Naive thymus-derived CD4-positive, alpha-beta T cell (primary cell): ENCODE measurements at regions of chr3 and their contacts with region 1.

Region 1: GRCh38 chr3:52705688-52706686 is at the starts of genes GLT8D1 and SPCS1:
- DNase-seq: peak; percentile 83 to 96 (median 91)
- ATAC-seq: peak; percentile 94
- H3K4me3 ChIP-seq: peak within 1 kb of the TSS; percentile 97
- H3K4me3 Mint-ChIP-seq: peak within 1 kb of the TSS; percentile 89 to 96 (median 94)
- H3K27ac ChIP-seq: peak within 1 kb of the TSS; percentile 93
- H3K27ac Mint-ChIP-seq: peak within 1 kb of the TSS; percentile 90 to 97 (median 95)
- H3K4me1 ChIP-seq: peaks cover 25 to 33% of the 10 kb centered on the region in 2 donors
- H3K4me1 Mint-ChIP-seq: peaks cover 21 to 46% (median 40%) of the 10 kb centered on the region in 7 donors
- H3K27me3 ChIP-seq: no peaks in the 10 kb centered on the region
- H3K27me3 Mint-ChIP-seq: no peaks in the 10 kb centered on the region
- total RNA-seq, gene GLT8D1: 18.9 to 47.7 (median 45.2) TPM
- total RNA-seq, gene SPCS1: 55.0 to 95.3 (median 78.2) TPM

Region 2: DNA sequence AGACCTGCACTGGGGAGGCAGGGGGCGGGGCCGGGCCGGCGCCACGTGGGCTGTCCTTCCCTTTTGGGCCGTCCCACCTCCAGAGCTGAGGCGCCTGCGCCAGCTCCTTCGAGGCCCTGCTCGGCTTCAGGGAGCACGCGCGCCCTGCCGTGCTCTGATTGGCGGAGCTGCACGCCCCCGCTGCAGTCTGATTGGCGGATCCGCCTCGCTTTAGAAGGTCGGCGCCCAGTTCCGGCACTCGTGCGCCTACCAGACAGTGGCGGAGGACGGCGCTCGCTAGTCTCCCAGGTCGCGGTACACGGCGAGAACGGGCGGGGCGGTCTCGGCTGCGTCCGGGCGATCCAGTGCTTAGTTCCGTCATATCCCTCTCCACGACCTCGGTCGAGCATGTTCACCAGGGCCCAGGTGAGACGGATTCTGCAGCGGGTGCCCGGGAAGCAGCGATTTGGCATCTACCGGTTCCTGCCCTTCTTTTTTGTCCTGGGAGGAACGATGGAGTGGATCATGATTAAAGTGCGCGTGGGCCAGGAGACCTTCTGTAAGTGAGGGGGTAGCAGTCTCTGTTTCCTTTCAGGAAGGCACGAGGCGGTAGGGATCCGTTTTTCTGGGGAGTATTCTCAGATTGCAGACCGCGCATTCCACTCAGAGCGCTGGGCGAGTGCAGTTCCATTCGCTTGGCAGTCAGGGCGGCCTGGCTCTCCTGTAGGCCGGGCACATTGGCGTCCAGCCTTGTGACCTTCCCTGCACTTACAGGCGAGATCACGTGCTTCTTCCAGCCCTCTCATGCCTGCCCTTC is 169.4 kb before region 1 on chr3 and contains the start of gene UQCC5:
- CTCF ChIA-PET with region 1: no interaction called
- POLR2A ChIA-PET with region 1: no interaction called
- intact Hi-C with region 1: loop called (anchors 1 kb)
- DNase-seq: peak; percentile 89 to 98 (median 97)
- ATAC-seq: peak; percentile 95
- H3K4me3 ChIP-seq: peak within 1 kb of the TSS; percentile 67
- H3K4me3 Mint-ChIP-seq: peak within 1 kb of the TSS; percentile 96 to 100 (median 99)
- H3K27ac ChIP-seq: peak within 1 kb of the TSS; percentile 85
- H3K27ac Mint-ChIP-seq: peak within 1 kb of the TSS; percentile 96 to 99 (median 98)
- H3K4me1 ChIP-seq: peaks cover 24 to 30% of the 10 kb centered on the region in 2 donors
- H3K4me1 Mint-ChIP-seq: peaks cover 29 to 66% (median 50%) of the 10 kb centered on the region in 7 donors
- H3K27me3 ChIP-seq: no peaks in the 10 kb centered on the region
- H3K27me3 Mint-ChIP-seq: no peaks in the 10 kb centered on the region
- total RNA-seq, gene UQCC5: 5.4 to 11.9 (median 10.7) TPM

Region 3: DNA sequence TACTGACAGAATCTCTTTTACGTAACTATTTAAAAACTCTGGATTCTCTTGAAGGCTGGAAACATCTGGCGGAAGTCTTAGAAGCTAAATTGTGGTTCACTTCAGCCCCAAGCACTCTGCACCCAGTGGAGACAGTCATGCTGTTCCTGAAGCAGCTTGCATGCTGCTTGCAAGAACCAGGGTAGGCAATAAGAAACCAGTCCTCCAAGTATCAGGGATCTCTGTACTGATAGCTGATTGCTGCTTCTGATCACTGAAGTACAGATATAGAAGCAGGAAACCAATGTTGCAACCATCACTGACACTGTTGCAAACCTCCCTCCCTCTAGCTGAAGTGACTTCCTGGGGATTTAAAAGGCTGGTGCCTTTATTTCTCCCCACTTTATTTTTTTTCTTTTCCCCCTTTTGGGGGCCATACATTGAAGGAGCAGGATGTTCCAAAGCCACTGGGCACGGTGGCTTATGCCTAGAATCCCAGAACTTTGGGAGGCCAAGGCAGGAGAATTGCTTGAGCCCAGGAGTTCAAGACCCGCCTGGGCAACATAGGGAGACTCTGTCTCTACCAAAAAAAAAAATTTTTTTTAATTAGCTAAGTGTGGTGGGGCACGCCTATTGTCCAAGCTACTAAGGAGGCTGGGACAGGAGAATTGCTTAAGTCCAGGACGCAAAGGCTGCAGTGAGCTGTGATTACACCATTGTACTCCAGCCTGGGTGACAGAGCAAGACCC is 15.2 kb after region 1 on chr3:
- CTCF ChIA-PET with region 1: interaction called, 9 read pairs
- POLR2A ChIA-PET with region 1: interaction called, 33 read pairs
- intact Hi-C with region 1: loop called in 1 of 2 experiments (anchors 2 kb)
- DNase-seq: peak in 7 of 9 donors; percentile 47 to 69 (median 55)
- ATAC-seq: peak; percentile 86
- H3K4me3 ChIP-seq: no peak overlapping the region
- H3K4me3 Mint-ChIP-seq: peak overlapping the region; percentile 51 to 81 (median 69)
- H3K27ac ChIP-seq: peak overlapping the region; percentile 69
- H3K27ac Mint-ChIP-seq: peak overlapping the region; percentile 77 to 95 (median 92)
- H3K4me1 ChIP-seq: peaks cover 0 to 28% of the 10 kb centered on the region in 2 donors
- H3K4me1 Mint-ChIP-seq: peaks cover 18 to 47% (median 33%) of the 10 kb centered on the region in 7 donors
- H3K27me3 ChIP-seq: no peaks in the 10 kb centered on the region
- H3K27me3 Mint-ChIP-seq: no peaks in the 10 kb centered on the region

Region 4: DNA sequence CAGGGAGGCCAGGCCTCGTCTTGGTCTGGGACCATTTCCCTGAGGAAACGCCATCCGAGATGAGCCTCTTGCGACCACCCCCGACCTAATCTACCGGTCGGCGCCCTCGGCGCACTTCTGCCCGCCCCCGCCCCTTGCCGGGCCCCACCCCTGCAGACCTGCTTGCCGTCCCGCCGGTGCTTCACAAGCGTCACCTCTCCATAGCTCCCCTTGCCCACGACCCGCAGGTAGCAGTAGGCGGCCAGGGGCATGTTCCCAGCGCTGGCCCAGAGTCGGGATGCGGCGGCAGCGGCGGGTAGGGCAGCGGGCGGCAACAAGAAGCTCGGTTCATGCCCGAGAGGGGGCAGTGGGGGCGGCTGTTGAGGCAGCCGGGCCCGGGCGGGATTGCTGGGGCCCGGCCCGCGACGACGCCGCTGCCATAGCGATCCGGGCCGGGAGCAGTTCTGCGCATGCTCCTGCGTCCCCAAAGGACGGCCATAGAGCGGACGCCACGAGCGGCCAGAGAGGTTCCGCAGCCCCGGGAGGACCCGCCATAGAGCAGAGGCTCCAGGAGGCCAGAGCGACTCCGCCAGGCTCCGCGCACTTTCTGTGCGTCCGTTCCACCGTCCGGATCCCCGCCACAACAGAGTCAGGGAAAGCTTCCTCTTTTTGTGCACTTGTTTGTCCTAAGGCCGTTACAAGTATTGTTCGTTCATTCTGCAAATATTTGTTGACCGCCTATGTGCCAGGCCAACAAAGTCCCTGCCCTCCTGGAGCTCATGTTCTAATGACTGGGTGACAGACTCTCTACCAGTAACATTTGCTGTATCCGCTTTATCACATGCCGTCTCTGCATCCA is 64.7 kb after region 1 on chr3 and contains the start of gene NEK4:
- CTCF ChIA-PET with region 1: no interaction called
- POLR2A ChIA-PET with region 1: interaction called, 12 read pairs
- intact Hi-C with region 1: loop called (anchors 1 kb)
- DNase-seq: peak; percentile 44 to 86 (median 65)
- ATAC-seq: peak; percentile 89
- H3K4me3 ChIP-seq: peak within 1 kb of the TSS; percentile 83
- H3K4me3 Mint-ChIP-seq: peak within 1 kb of the TSS; percentile 83 to 99 (median 95)
- H3K27ac ChIP-seq: peak within 1 kb of the TSS; percentile 72
- H3K27ac Mint-ChIP-seq: peak within 1 kb of the TSS; percentile 89 to 97 (median 93)
- H3K4me1 ChIP-seq: peaks cover 5 to 16% of the 10 kb centered on the region in 2 donors
- H3K4me1 Mint-ChIP-seq: peaks cover 12 to 34% (median 23%) of the 10 kb centered on the region in 7 donors
- H3K27me3 ChIP-seq: no peaks in the 10 kb centered on the region
- H3K27me3 Mint-ChIP-seq: peaks cover 0 to 12% (median 0%) of the 10 kb centered on the region in 5 donors
- total RNA-seq, gene NEK4: 14.4 to 28.4 (median 21.1) TPM

Region 5: DNA sequence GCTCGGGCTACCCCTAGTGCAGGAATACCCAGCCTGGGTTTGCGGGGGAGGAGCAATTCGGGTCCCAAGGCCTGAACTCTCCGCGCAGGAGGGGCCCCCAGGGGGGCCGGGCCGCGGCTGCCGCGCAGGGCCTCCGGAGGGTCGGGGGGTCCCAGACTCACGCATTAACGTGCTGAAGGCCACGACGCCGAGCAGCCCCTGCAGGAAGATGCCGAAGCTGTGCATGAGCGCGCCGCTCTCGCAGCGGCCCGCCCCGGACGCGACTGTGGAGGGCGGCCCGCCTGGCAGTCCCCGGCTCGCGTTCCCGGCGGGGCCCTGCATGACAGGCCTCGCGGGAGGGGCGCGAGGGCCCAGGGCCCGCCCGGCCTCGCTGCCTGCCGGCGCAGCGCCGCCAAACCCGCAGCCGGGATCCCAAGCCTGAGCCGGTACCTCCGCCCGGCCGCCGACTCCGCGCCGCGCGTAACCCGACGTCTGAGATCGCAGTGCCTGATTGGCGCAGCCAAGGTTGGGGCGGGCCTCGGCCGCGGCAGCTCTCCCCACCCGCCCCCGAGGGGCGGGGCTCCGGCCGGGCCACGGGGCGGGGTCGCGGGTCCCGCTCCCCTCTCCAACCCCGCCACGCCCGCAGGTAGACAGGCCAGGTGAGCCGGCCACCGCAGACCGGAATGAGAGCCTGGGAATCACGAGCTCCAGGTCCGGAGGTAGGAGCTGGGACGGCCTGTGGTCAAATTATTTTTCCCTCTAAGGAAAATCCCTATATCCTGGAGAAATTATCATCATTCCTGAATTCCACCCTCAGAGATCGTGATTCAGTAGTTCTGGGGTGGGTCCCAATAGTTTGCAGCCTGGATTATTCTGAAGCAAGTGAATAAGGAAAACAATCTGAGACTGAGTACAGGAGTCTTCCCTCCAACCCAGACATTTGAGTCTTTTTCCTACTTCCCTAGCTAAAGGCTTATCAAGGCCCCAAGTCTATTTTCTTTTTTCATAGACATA is 191.4 kb after region 1 on chr3 and contains the start of gene STIMATE:
- CTCF ChIA-PET with region 1: no interaction called
- POLR2A ChIA-PET with region 1: no interaction called
- intact Hi-C with region 1: loop called in 1 of 2 experiments (anchors 5 kb)
- DNase-seq: peak; percentile 77 to 89 (median 86)
- ATAC-seq: peak; percentile 97
- H3K4me3 ChIP-seq: peak within 1 kb of the TSS; percentile 85
- H3K4me3 Mint-ChIP-seq: peak within 1 kb of the TSS; percentile 90 to 99 (median 95)
- H3K27ac ChIP-seq: peak within 1 kb of the TSS; percentile 72
- H3K27ac Mint-ChIP-seq: peak within 1 kb of the TSS; percentile 44 to 97 (median 86)
- H3K4me1 ChIP-seq: peaks cover 16 to 23% of the 10 kb centered on the region in 2 donors
- H3K4me1 Mint-ChIP-seq: peaks cover 37 to 51% (median 45%) of the 10 kb centered on the region in 7 donors
- H3K27me3 ChIP-seq: no peaks in the 10 kb centered on the region
- H3K27me3 Mint-ChIP-seq: no peaks in the 10 kb centered on the region
- total RNA-seq, gene STIMATE: 21.1 to 44.9 (median 34.5) TPM